ENCODE measurements at regions of chr16 and their contacts with region 1.

Region 1: GRCh38 chr16:1363501-1364041 is 11.8 kb downstream of the GNPTG start:
- DNase-seq: no peak
- H3K4me3 ChIP-seq: no peak overlapping the region
- H3K27ac ChIP-seq: no peak overlapping the region
- H3K27me3 ChIP-seq: no peaks in the 10 kb centered on the region
- CTCF ChIP-seq: peak; percentile 69

Region 2: GRCh38 chr16:1221628-1222552 is 141.7 kb before region 1 on chr16:
- CTCF ChIA-PET with region 1: no interaction called
- POLR2A ChIA-PET with region 1: no interaction called
- DNase-seq: no peak
- H3K4me3 ChIP-seq: no peak overlapping the region
- H3K27ac ChIP-seq: no peak overlapping the region
- H3K27me3 ChIP-seq: no peaks in the 10 kb centered on the region
- CTCF ChIP-seq: no peak

Region 3: GRCh38 chr16:1325673-1326371 is 37.7 kb before region 1 on chr16:
- CTCF ChIA-PET with region 1: no interaction called
- POLR2A ChIA-PET with region 1: no interaction called
- DNase-seq: no peak
- H3K4me3 ChIP-seq: no peak overlapping the region
- H3K27ac ChIP-seq: no peak overlapping the region
- H3K27me3 ChIP-seq: peaks cover 7% of the 10 kb centered on the region
- CTCF ChIP-seq: no peak

Region 4: GRCh38 chr16:1346422-1347285 is 16.9 kb before region 1 on chr16:
- CTCF ChIA-PET with region 1: no interaction called
- POLR2A ChIA-PET with region 1: no interaction called
- DNase-seq: no peak
- H3K4me3 ChIP-seq: no peak overlapping the region
- H3K27ac ChIP-seq: no peak overlapping the region
- H3K27me3 ChIP-seq: no peaks in the 10 kb centered on the region
- CTCF ChIP-seq: no peak

Region 5: GRCh38 chr16:1379304-1380076 is 15.9 kb after region 1 on chr16:
- CTCF ChIA-PET with region 1: interaction called, 10 read pairs
- POLR2A ChIA-PET with region 1: interaction called, 4 read pairs
- DNase-seq: no peak
- H3K4me3 ChIP-seq: peak overlapping the region; percentile 57
- H3K27ac ChIP-seq: peak overlapping the region; percentile 47
- H3K27me3 ChIP-seq: no peaks in the 10 kb centered on the region
- CTCF ChIP-seq: no peak

Region 6: DNA sequence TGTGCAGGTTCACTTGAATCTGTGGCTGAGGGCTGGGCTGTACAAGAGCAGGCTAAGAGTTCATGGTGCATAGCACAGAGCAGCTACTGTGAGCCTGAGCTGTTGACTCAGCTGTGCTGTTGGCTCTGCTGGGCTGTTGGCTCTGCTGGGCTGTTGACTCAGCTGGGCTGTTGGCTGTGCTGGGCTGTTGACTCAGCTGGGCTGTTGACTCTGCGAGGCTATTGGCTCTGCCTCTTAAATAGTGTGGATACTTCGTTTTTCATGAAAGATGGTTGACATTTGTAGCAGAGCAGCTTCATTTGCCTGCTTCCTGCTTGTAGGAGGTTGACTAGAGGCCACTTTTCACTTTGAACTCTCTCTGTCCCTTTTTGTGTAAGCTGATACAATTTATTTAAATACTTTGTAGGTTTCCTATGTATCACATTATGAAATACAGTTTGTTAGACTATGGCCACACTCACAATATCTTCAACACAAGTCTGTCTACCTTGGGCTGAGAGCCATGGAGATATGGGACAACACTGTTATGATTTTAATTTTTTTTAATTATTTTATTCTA is 1025.4 kb after region 1 on chr16:
- CTCF ChIA-PET with region 1: no interaction called
- POLR2A ChIA-PET with region 1: no interaction called
- DNase-seq: peak; percentile 7
- H3K4me3 ChIP-seq: no peak overlapping the region
- H3K27ac ChIP-seq: no peak overlapping the region
- H3K27me3 ChIP-seq: peaks cover 3% of the 10 kb centered on the region
- CTCF ChIP-seq: no peak

Measured in AG04450 (cell line).